Panc1 (cell line): ENCODE measurements at regions of chr11 and their contacts with region 1.

Region 1: GRCh38 chr11:102940714-102941588 is 14.6 kb downstream of the MMP13 start:
- DNase-seq: peak; percentile 47
- ATAC-seq: peak; percentile 96
- H3K4me3 ChIP-seq: no peak overlapping the region
- H3K27ac ChIP-seq: no peak overlapping the region
- H3K4me1 ChIP-seq: no peaks in the 10 kb centered on the region
- H3K27me3 ChIP-seq: peaks cover 5% of the 10 kb centered on the region; the same call in 1 of the 2 replicates
- CTCF ChIP-seq: peak; percentile 89

Region 2: GRCh38 chr11:101401245-101401644 is 1539.7 kb before region 1 on chr11:
- CTCF ChIA-PET with region 1: no interaction called
- POLR2A ChIA-PET with region 1: no interaction called
- in situ Hi-C with region 1: no loop called
- intact Hi-C with region 1: no loop called
- DNase-seq: no peak
- ATAC-seq: no peak
- H3K4me3 ChIP-seq: no peak overlapping the region
- H3K27ac ChIP-seq: no peak overlapping the region
- H3K4me1 ChIP-seq: no peaks in the 10 kb centered on the region
- H3K27me3 ChIP-seq: peaks cover under 1% of the 10 kb centered on the region; the same call in 1 of the 2 replicates
- CTCF ChIP-seq: no peak

Region 3: DNA sequence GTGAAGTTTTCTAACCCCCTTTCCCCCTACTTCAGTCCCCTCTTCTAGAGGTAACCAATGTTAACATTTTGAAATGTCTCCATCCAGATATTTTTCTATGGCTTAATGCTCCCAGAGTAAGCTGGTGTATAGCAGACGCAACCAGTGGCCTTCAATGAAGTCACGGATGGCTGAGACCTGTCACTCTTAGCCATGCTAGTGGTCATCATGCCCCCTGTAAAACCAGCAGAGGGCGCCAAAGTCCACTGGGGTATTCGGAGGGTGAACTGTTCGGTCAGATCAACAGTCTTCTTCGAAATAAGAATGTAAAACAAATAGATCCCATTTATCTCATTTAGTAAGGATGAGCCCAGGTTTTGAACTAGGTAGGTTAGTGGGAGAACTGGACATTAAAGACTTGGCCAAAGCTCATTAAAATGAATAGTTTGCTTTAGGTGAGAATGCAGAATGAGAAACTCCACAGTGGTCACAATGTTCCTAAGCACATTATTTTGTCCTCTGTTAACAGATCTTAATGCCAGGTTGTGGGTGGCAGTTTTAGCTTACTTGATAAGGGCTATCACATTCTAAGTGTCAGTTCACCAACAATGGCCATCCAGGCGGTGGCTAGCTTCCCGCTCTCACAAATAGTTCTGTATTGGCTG is 207.6 kb before region 1 on chr11:
- CTCF ChIA-PET with region 1: no interaction called
- POLR2A ChIA-PET with region 1: no interaction called
- in situ Hi-C with region 1: no loop called
- intact Hi-C with region 1: loop called (anchors 1 kb)
- DNase-seq: peak; percentile 41
- ATAC-seq: peak; percentile 96
- H3K4me3 ChIP-seq: no peak overlapping the region
- H3K27ac ChIP-seq: no peak overlapping the region
- H3K4me1 ChIP-seq: no peaks in the 10 kb centered on the region
- H3K27me3 ChIP-seq: peaks cover 16% of the 10 kb centered on the region
- CTCF ChIP-seq: peak; percentile 98

Region 4: GRCh38 chr11:102831489-102832440 is 109.2 kb before region 1 on chr11:
- CTCF ChIA-PET with region 1: interaction called, 3 read pairs
- POLR2A ChIA-PET with region 1: no interaction called
- in situ Hi-C with region 1: no loop called
- intact Hi-C with region 1: loop called (anchors 1 kb)
- DNase-seq: no peak
- ATAC-seq: peak; percentile 91
- H3K4me3 ChIP-seq: peak overlapping the region; percentile 38 to 62
- H3K27ac ChIP-seq: no peak overlapping the region
- H3K4me1 ChIP-seq: peaks cover 6% of the 10 kb centered on the region
- H3K27me3 ChIP-seq: peaks cover 34% of the 10 kb centered on the region
- CTCF ChIP-seq: peak; percentile 94

Region 5: DNA sequence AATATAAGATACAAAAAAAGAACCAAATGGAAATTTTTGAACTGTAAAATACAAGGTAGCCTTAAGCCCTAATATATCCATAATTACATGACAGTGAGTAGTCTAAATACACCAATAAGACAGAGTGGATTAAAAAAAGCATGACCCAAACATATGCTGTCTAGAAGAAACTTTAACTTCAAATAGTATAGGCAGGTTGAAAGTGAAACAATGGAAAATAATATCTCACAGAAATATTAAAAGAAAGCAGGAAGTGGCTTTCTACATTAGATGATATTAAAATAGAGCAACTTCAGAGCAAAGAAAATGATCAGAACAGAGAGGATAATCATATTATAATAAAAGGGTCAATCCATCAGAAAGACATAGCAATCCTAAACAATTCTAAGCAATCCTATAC is 129.2 kb after region 1 on chr11:
- CTCF ChIA-PET with region 1: no interaction called
- POLR2A ChIA-PET with region 1: no interaction called
- in situ Hi-C with region 1: no loop called
- intact Hi-C with region 1: no loop called
- DNase-seq: no peak
- ATAC-seq: no peak
- H3K4me3 ChIP-seq: no peak overlapping the region
- H3K27ac ChIP-seq: no peak overlapping the region
- H3K4me1 ChIP-seq: no peaks in the 10 kb centered on the region
- H3K27me3 ChIP-seq: no peaks in the 10 kb centered on the region
- CTCF ChIP-seq: no peak